ENCODE measurements at regions of chr3 and their contacts with region 1.

Region 1: GRCh38 chr3:69671082-69671952 is 67.9 kb upstream of the MITF start:
- DNase-seq: peak; percentile 8
- ATAC-seq: no peak
- H3K4me3 ChIP-seq: no peak overlapping the region
- H3K27ac ChIP-seq: no peak overlapping the region
- H3K4me1 ChIP-seq: no peaks in the 10 kb centered on the region
- H3K27me3 ChIP-seq: no peaks in the 10 kb centered on the region
- CTCF ChIP-seq: peak; percentile 59
- EP300 ChIP-seq: no peak
- POLR2A ChIP-seq: no peak
- RAD21 ChIP-seq: peak; percentile 43; the same call in 1 of the 2 replicates

Region 2: GRCh38 chr3:68436619-68437401 is 1234.5 kb before region 1 on chr3:
- CTCF ChIA-PET with region 1: no interaction called
- POLR2A ChIA-PET with region 1: no interaction called
- in situ Hi-C with region 1: no loop called
- intact Hi-C with region 1: no loop called
- DNase-seq: no peak
- ATAC-seq: no peak
- H3K4me3 ChIP-seq: no peak overlapping the region
- H3K27ac ChIP-seq: no peak overlapping the region
- H3K4me1 ChIP-seq: no peaks in the 10 kb centered on the region
- H3K27me3 ChIP-seq: no peaks in the 10 kb centered on the region
- CTCF ChIP-seq: no peak
- EP300 ChIP-seq: no peak
- POLR2A ChIP-seq: no peak
- RAD21 ChIP-seq: no peak

Region 3: DNA sequence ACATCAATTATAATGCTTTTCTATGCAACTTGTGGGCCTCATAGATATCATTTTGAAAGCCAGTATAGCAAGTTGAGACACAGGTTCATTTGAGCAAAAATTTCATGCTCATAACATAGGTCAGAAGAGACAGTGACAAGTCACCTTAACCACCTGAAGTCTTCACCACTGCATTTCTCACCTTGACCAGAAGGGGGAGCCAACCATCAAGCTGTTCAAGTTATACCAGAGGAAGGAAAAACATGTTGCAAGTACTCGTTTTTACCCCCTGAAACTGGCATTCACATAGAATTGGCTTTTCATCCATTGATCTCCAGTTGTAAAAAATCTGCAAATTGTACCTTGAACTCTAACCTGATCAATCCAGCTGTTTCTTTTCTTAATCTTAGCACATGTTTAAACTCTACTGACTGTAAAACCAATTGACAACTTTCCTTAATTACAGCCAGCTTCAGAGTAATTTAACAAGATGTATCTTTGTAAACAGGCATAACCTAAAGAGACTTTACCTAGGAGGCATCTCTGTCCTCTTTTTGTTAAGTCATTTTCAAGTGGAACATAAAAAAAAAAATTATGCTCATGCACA is 550.3 kb before region 1 on chr3:
- CTCF ChIA-PET with region 1: interaction called, 9 read pairs
- POLR2A ChIA-PET with region 1: no interaction called
- in situ Hi-C with region 1: loop called (anchors 25 kb)
- intact Hi-C with region 1: loop called (anchors 1 kb)
- DNase-seq: peak; percentile 72
- ATAC-seq: peak; percentile 77
- H3K4me3 ChIP-seq: no peak overlapping the region
- H3K27ac ChIP-seq: no peak overlapping the region
- H3K4me1 ChIP-seq: no peaks in the 10 kb centered on the region
- H3K27me3 ChIP-seq: peaks cover 0 to 5% of the 10 kb centered on the region in 2 experiments; a peak in 1 of 5 replicates
- CTCF ChIP-seq: peak; percentile 82
- EP300 ChIP-seq: no peak
- POLR2A ChIP-seq: no peak
- RAD21 ChIP-seq: peak; percentile 53; the same call in 1 of the 2 replicates

Region 4: GRCh38 chr3:69306239-69307185 is 364.8 kb before region 1 on chr3:
- CTCF ChIA-PET with region 1: no interaction called
- POLR2A ChIA-PET with region 1: no interaction called
- in situ Hi-C with region 1: no loop called
- intact Hi-C with region 1: loop called (anchors 5 kb)
- DNase-seq: peak; percentile 80
- ATAC-seq: peak; percentile 97
- H3K4me3 ChIP-seq: no peak overlapping the region
- H3K27ac ChIP-seq: no peak overlapping the region
- H3K4me1 ChIP-seq: no peaks in the 10 kb centered on the region
- H3K27me3 ChIP-seq: peaks cover 0 to 7% of the 10 kb centered on the region in 2 experiments; a peak in 2 of 5 replicates
- CTCF ChIP-seq: peak; percentile 95
- EP300 ChIP-seq: no peak
- POLR2A ChIP-seq: no peak
- RAD21 ChIP-seq: peak; percentile 86

Region 5: DNA sequence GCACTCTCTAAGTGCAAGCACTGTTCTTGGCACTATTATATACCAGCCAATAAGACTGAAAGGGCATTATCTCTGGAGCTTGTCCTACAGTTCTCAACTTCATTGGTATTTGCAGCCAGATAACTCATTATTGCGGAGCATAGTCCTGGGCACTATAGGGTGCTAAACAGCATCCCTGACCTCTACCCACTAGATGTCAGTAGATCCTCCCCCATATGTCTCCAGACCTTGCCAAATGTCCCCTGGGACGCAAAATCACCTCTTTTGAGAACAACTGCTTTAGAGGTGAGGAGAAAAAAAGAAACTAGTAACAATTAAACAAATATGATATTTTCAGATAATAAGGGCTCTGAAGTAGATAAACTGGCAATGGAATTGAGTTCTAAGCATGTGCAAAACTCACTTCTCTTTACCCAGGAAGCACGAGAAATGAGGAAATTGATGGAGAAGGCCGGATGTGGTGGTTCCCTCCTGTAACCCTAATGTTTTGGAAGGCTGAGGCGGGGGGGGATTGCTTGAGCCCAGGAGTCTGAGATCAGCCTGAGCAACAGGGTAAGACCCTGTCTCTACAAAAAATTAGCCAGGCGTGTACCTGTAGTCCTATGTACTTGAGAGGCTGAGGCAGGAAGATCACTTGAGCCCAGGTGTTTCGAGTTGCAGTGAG is 346.8 kb before region 1 on chr3:
- CTCF ChIA-PET with region 1: no interaction called
- POLR2A ChIA-PET with region 1: no interaction called
- in situ Hi-C with region 1: loop called (anchors 5 kb)
- intact Hi-C with region 1: no loop called
- DNase-seq: peak; percentile 7
- ATAC-seq: peak; percentile 91
- H3K4me3 ChIP-seq: no peak overlapping the region
- H3K27ac ChIP-seq: no peak overlapping the region
- H3K4me1 ChIP-seq: peaks cover 9% of the 10 kb centered on the region
- H3K27me3 ChIP-seq: no peaks in the 10 kb centered on the region; a peak in 1 of 5 replicates
- CTCF ChIP-seq: peak; percentile 47
- EP300 ChIP-seq: no peak
- POLR2A ChIP-seq: no peak
- RAD21 ChIP-seq: no peak

Region 6: DNA sequence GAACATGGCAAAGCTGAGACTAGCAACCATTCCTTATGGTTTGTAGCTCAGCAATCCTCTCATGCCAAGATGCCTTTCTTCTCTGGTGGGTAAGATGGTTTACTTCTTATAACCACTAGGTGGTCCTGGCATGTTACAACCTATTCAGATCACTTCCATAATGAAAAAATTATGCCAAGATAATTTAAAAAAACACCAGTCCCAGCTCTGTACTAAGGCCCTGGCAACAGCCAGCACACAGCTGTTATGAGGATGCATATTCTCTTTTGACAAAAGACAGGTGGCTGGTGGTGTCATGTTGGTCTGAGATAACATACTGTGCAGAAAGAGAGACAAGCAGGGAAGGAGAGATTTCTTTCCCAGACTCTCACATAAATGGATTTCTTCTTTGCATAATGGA is 219.7 kb before region 1 on chr3:
- CTCF ChIA-PET with region 1: no interaction called
- POLR2A ChIA-PET with region 1: no interaction called
- in situ Hi-C with region 1: no loop called
- intact Hi-C with region 1: loop called (anchors 10 kb)
- DNase-seq: no peak
- ATAC-seq: no peak
- H3K4me3 ChIP-seq: no peak overlapping the region
- H3K27ac ChIP-seq: no peak overlapping the region
- H3K4me1 ChIP-seq: no peaks in the 10 kb centered on the region
- H3K27me3 ChIP-seq: no peaks in the 10 kb centered on the region
- CTCF ChIP-seq: no peak
- EP300 ChIP-seq: no peak
- POLR2A ChIP-seq: no peak
- RAD21 ChIP-seq: no peak